Cardiac septum (tissue), 1 donor: ENCODE measurements at regions of chr19 and their contacts with region 1.

Region 1: DNA sequence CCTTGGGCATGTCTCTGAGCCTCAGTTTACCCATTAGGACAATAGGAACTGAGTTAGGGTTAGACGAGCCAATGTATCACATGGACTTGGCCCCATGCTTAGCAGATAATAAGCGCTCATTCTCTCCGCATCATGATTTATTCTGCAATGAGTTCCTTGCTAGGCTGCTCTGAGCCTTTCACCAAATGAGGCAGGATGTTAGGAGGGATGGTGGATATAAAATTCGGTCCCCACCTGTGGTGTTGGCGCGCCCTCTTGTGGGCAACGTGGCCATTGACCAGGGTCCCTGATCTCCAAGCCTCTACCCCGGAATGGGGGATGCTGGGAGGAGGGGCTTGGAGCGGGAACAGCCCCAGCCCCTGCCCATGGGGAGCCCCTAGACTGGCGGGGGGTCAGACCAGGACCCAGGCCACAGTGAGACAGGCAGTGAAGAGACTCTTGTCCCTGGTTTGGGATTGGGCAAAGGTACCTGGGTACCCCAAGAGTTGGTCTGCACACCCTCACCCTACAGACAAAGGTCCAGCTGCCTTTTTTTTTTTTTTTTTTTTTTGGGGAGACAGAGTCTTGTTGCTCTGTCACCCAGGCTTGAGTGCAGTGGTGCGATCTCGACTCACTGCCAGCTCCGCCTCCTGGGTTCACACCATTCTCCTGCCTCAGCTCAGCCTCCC is 43.9 kb downstream of the CERS4 start:
- DNase-seq: peak; percentile 91

Region 2: GRCh38 chr19:7943444-7944176 is 309.4 kb before region 1 on chr19 and contains the start of gene TIMM44:
- intact Hi-C with region 1: loop called (anchors 2 kb)
- DNase-seq: peak; percentile 100
- total RNA-seq, gene TIMM44: 82.6 TPM

Region 3: DNA sequence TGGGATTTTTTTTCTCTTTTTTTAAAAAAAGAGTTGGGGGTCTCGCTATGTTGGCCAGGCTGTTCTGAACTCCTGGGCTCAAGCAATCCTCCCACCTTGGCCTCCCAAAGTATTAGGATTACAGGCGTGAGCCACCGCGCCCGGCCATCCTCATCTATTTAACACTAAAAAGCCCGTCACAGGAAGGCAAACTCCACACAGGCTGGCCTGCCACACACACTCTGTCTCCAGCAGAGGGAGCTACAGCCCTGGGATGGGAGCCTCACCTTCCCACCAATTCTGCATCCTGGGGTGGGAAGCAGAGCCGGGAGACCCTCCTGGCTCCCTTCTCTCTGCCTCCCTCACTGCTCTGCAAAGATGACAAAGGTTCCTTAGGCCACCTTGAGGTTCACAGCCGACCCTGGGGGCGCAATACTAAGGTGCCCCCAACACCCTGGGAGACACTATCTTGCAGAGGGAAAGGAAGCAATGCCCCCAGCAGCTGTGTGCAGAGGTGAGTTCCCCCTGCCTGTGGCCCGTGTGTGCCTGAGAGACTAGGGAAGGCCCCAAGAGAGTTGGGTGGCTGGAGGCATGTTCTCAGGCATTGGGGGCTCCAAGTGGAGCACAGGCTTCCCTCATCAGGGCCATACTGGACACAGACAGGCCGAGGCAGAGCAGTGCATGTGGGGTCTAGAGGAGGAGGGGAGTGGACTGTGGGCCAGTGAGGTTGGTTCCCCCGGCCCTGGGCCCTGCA is 282.2 kb before region 1 on chr19:
- intact Hi-C with region 1: loop called (anchors 5 kb)
- DNase-seq: no peak

Region 4: GRCh38 chr19:8158411-8159074 is 94.5 kb before region 1 on chr19:
- intact Hi-C with region 1: loop called (anchors 1 kb)
- DNase-seq: no peak

Region 5: GRCh38 chr19:8208922-8209461 is 44.1 kb before region 1 on chr19 and contains the start of gene CERS4:
- intact Hi-C with region 1: loop called (anchors 5 kb)
- DNase-seq: peak; percentile 82
- total RNA-seq, gene CERS4: 24.1 TPM

Region 6: DNA sequence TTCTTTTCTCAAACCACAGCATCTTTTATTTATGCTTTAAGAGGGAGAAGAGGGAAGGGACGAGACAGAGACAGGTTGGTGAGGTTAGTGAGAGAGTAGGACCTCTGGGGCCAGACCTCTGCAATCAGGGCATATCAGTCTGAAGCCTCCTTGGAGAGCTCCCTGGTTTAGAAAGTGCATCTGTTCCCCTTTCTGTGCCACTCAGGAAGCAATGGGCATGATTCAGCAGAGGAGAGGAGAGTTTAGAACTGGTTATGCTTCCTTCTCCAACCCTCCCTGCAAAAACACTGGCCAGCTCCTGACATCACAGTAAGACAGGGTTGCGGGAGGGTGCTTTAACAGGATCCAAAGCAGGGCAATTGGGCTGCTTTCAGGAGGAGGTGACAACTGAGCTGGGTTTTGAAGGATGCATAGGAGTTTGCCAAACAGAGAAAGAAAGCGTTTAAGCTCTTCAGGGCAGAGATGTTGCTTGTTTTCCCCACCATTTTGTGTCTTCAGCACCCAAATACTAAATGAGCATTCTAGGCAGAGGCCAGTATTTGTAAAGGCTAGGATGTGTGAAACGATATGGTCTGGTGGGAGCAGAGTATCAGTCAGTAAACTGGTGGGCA is 10.7 kb before region 1 on chr19:
- intact Hi-C with region 1: loop called (anchors 1 kb)
- DNase-seq: no peak